ENCODE measurements at regions of chr4 and their contacts with region 1.

Region 1: DNA sequence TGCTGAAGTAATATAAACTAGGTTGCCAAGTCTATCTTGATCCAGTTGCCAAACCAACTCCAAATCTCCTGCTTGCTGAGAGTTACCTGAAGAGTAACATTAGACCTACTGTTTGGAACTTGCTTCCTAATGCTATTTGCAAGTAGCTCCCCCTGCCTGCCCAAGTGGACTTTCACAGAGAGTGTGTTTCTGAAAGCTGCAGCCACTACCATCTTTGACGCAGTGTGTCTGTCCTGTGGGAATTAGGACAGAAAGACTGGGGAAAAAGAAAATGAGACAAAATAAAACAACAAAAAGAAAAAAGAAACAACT is 195.0 kb upstream of the HS3ST1 start:
- DNase-seq: peak in 2 of 5 donors; percentile 23 to 35
- ATAC-seq: peak in 1 of 4 donors; percentile 41
- H3K4me3 ChIP-seq: no peak overlapping the region
- H3K27ac ChIP-seq: peak overlapping the region in 2 of 12 donors; percentile 62 to 75
- H3K4me1 ChIP-seq: peaks cover 0 to 21% (median 0%) of the 10 kb centered on the region in 12 donors
- H3K27me3 ChIP-seq: no peaks in the 10 kb centered on the region
- CTCF ChIP-seq: peak; percentile 19 to 67 (median 44)
- POLR2A ChIP-seq: no peak

Region 2: GRCh38 chr4:10577018-10577417 is 1046.7 kb before region 1 on chr4:
- intact Hi-C with region 1: loop called in 1 of 10 experiments (anchors 10 kb)
- DNase-seq: no peak
- ATAC-seq: no peak
- H3K4me3 ChIP-seq: no peak overlapping the region
- H3K27ac ChIP-seq: no peak overlapping the region
- H3K4me1 ChIP-seq: peaks cover 0 to 5% (median 0%) of the 10 kb centered on the region in 12 donors
- H3K27me3 ChIP-seq: peaks cover 0 to 10% (median 0%) of the 10 kb centered on the region in 9 donors
- CTCF ChIP-seq: no peak
- POLR2A ChIP-seq: no peak

Region 3: GRCh38 chr4:11428899-11429698 is 194.6 kb before region 1 on chr4:
- intact Hi-C with region 1: loop called in 8 of 10 experiments (anchors 2 to 10 kb)
- DNase-seq: peak; percentile 80 to 90 (median 83)
- ATAC-seq: peak; percentile 81 to 98 (median 96)
- H3K4me3 ChIP-seq: peak overlapping the region; percentile 32 to 75 (median 64)
- H3K27ac ChIP-seq: peak overlapping the region in 8 of 12 donors; percentile 5 to 55 (median 31)
- H3K4me1 ChIP-seq: peaks cover 0 to 27% (median 18%) of the 10 kb centered on the region in 12 donors
- H3K27me3 ChIP-seq: peaks cover 0 to 24% (median 12%) of the 10 kb centered on the region in 9 donors
- CTCF ChIP-seq: peak; percentile 48 to 84 (median 64)
- POLR2A ChIP-seq: no peak

Region 4: DNA sequence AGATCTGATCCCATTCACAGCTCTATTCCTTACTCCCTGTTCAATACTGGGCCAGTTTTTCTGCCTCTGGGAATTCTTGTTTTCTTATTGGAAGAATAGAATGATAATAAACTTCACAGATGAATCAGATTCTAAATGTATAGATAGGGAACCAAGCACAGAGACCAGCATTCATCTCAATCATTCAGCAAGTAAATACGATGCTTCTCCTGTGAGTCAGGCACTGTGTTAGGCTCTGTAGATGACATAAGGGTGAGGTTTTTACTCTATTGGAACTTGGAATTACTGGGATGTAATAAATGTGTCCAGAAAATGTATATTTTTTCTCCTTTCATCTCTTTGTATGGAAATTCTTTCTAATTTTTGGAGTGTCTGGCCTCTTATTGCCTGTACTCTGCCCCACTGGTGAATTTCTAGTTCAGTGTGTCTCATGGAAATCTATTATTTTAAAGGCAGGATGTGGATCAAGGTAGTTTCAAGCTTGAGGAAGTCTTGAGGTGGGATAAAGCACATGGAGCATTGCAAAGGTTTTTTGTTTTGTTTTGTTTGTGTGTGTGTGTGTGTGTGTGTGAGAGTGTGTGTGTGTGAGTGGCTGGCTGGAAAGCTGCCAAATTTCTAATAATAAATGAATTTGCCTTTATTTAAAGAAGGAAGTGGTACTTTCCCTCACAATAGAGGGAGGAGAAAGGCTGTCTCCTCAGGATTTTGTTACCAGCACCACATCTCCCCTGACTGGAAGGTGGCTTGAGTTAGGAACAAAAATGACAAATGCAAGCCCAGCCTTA is 77.1 kb before region 1 on chr4:
- intact Hi-C with region 1: loop called in 1 of 10 experiments (anchors 2 kb)
- DNase-seq: no peak
- ATAC-seq: no peak
- H3K4me3 ChIP-seq: no peak overlapping the region
- H3K27ac ChIP-seq: no peak overlapping the region
- H3K4me1 ChIP-seq: peaks cover 0 to 17% (median 0%) of the 10 kb centered on the region in 12 donors
- H3K27me3 ChIP-seq: no peaks in the 10 kb centered on the region
- CTCF ChIP-seq: no peak
- POLR2A ChIP-seq: no peak

Region 5: DNA sequence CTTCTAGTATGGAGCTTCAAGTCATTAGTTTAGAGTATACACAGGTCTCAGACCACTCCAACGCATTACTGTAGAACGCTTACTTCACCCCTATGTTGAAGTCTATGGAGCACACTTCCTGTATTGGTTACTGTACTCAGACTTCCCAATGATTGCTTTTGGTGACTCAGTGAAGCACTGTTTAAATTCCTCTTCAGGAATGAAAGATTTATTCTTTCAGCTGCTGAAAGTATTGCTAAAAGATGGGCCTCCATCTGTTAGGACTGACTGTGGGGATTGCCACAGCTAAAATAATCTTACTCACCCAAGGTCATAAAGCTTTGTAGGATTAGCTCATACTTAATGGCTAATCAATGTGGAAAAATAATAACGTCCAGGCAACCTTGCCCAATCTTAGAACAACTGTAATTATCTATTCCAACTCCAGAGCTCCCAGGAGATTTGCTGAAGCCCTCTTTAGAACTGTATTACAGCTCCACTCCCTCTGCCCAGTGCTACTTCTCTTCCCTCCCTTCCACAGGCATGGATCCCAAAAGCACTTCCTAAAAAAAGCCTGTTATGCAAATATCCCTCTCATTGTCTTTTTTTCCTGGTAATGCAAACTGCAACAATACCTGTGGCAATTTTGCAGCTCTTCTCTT is 86.9 kb after region 1 on chr4:
- intact Hi-C with region 1: loop called in 1 of 10 experiments (anchors 10 kb)
- DNase-seq: no peak
- ATAC-seq: no peak
- H3K4me3 ChIP-seq: no peak overlapping the region
- H3K27ac ChIP-seq: no peak overlapping the region
- H3K4me1 ChIP-seq: peaks cover 0 to 4% (median 0%) of the 10 kb centered on the region in 12 donors
- H3K27me3 ChIP-seq: no peaks in the 10 kb centered on the region
- CTCF ChIP-seq: no peak
- POLR2A ChIP-seq: no peak

Measured in heart left ventricle (tissue), 16 donors.